ENCODE measurements at regions of chr9 and their contacts with region 1.

Region 1: DNA sequence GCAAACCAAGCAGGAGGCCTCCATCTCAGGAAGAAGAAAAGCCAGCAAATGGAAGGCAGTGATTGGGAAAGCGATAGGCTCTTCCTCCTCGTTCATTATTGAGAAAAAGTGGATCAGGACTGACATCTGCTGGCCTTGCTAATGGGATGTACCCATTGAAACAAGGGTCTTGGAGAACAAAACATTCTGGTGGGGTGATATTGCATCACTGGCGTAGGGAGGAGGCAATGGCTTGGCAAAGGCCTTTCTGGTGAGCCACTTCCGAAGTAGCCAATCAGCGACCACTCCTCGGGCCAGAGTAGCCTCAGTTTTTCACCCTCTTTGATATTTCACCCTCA is 86.7 kb upstream of the NFIB start:
- DNase-seq: peak; percentile 15 to 69
- ATAC-seq: peak; percentile 80 to 94 (median 88)
- H3K4me3 ChIP-seq: peak overlapping the region in 5 of 10 donors; percentile 19 to 35 (median 30)
- H3K27ac ChIP-seq: peak overlapping the region in 4 of 10 donors; percentile 4 to 42 (median 24)
- H3K4me1 ChIP-seq: peaks cover 0 to 27% (median 16%) of the 10 kb centered on the region in 9 donors
- H3K27me3 ChIP-seq: no peaks in the 10 kb centered on the region
- CTCF ChIP-seq: peak; percentile 40 to 80 (median 64)

Region 2: GRCh38 chr9:13351778-13352386 is 1048.7 kb before region 1 on chr9:
- intact Hi-C with region 1: loop called in 4 of 10 experiments (anchors 2 to 10 kb)
- DNase-seq: peak in 1 of 2 donors; percentile 40
- ATAC-seq: peak in 2 of 8 donors; percentile 31 to 55
- H3K4me3 ChIP-seq: no peak overlapping the region
- H3K27ac ChIP-seq: no peak overlapping the region
- H3K4me1 ChIP-seq: no peaks in the 10 kb centered on the region
- H3K27me3 ChIP-seq: no peaks in the 10 kb centered on the region
- CTCF ChIP-seq: peak; percentile 54 to 84 (median 68)

Region 3: DNA sequence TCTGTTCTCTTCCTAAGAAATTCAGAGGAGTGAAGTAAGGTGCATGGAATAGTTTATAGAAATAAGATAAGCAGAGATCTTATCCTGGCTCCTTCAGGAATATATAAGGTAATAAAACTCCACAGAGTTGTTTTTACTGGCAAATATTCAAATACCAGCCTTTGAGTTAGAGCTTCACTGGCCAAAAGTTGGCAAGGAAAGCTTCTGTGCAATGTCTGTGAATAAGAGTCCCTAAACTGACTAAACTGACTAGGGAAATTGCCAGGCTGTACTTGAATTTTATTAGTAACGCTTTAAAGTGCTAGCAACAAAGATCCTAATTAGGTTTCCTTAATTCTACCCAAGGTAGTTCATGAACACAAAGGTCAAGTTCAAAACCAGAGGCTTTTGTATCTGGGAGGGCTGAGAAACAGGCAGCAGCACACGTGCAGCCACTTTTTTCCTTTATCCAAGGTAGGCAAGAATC is 990.0 kb before region 1 on chr9:
- intact Hi-C with region 1: loop called in 1 of 10 experiments (anchors 5 kb)
- DNase-seq: no peak
- ATAC-seq: no peak
- H3K4me3 ChIP-seq: no peak overlapping the region
- H3K27ac ChIP-seq: peak overlapping the region in 2 of 10 donors; percentile 1 to 66
- H3K4me1 ChIP-seq: peaks cover 0 to 27% (median 0%) of the 10 kb centered on the region in 9 donors
- H3K27me3 ChIP-seq: no peaks in the 10 kb centered on the region
- CTCF ChIP-seq: no peak

Region 4: GRCh38 chr9:13962006-13962405 is 438.6 kb before region 1 on chr9:
- intact Hi-C with region 1: no loop called
- DNase-seq: no peak
- ATAC-seq: peak in 6 of 8 donors; percentile 38 to 68 (median 61)
- H3K4me3 ChIP-seq: no peak overlapping the region
- H3K27ac ChIP-seq: peak overlapping the region in 1 of 10 donors; percentile 30
- H3K4me1 ChIP-seq: peaks cover 0 to 26% (median 7%) of the 10 kb centered on the region in 9 donors
- H3K27me3 ChIP-seq: no peaks in the 10 kb centered on the region
- CTCF ChIP-seq: no peak

Region 5: DNA sequence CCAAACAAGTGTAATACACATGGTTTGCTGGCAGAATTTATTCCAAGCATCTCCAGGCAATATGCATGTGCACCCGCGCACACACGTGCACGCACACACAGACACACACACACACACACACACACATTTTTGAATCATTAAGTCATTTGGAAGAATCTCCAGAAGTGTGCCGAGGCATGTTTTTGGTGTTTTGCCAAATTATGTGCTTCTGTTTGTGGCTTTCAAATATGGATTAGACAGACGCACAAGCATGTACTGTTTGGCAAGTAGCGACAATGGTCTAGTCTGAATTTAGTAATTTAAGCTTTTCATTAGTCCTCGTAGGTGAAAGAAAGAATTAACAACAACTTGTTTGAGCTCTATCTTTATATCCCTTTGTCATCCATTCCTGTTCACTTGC is 123.4 kb before region 1 on chr9:
- intact Hi-C with region 1: no loop called
- DNase-seq: no peak
- ATAC-seq: peak; percentile 17 to 54 (median 38)
- H3K4me3 ChIP-seq: peak overlapping the region in 2 of 10 donors; percentile 5 to 12
- H3K27ac ChIP-seq: peak overlapping the region in 9 of 10 donors; percentile 5 to 84 (median 55)
- H3K4me1 ChIP-seq: peaks cover 10 to 99% (median 90%) of the 10 kb centered on the region in 9 donors
- H3K27me3 ChIP-seq: no peaks in the 10 kb centered on the region
- CTCF ChIP-seq: no peak

Region 6: GRCh38 chr9:14358523-14358922 is 42.1 kb before region 1 on chr9:
- intact Hi-C with region 1: loop called in 1 of 10 experiments (anchors 5 kb)
- DNase-seq: no peak
- ATAC-seq: no peak
- H3K4me3 ChIP-seq: no peak overlapping the region
- H3K27ac ChIP-seq: no peak overlapping the region
- H3K4me1 ChIP-seq: peaks cover 0 to 30% (median 25%) of the 10 kb centered on the region in 9 donors
- H3K27me3 ChIP-seq: no peaks in the 10 kb centered on the region
- CTCF ChIP-seq: no peak